Astrocyte of the cerebellum (primary cell): ENCODE measurements at regions of chr9 and their contacts with region 1.

Region 1: GRCh38 chr9:13427587-13427986 is 148.1 kb upstream of the MPDZ start:
- DNase-seq: peak; percentile 68
- H3K4me3 ChIP-seq: no peak overlapping the region
- CTCF ChIP-seq: peak; percentile 50

Region 2: GRCh38 chr9:14062586-14063221 is 635.1 kb after region 1 on chr9:
- in situ Hi-C with region 1: loop called (anchors 25 kb)
- DNase-seq: peak; percentile 23
- H3K4me3 ChIP-seq: no peak overlapping the region
- CTCF ChIP-seq: no peak

Region 3: GRCh38 chr9:14353222-14354056 is 925.9 kb after region 1 on chr9:
- in situ Hi-C with region 1: loop called (anchors 25 kb)
- DNase-seq: peak; percentile 73
- H3K4me3 ChIP-seq: no peak overlapping the region
- CTCF ChIP-seq: peak; percentile 89